GM12878 (cell line): ENCODE measurements at regions of chr1 and their contacts with region 1.

Region 1: DNA sequence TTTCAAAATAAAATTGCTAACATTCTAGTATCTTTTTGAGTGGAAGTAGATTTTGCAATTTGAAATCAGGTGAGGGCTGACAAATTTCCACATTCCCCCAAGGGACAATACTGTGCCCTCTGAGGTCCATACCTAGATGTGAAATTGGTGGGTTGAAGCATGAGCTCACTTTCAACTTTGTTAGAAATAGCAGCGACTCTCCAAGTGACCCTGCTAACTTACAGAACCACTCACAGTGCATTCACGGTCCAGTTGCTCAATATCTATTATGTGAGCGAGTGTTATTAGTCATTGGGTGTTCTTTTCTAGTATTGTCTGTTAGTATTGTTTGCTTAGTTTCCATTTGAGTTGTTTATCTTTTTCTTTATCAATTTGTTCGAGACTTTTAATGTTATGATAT is 53.6 kb upstream of the ASB17 start:
- DNase-seq: peak; percentile 75
- ATAC-seq: peak; percentile 93
- H3K4me3 ChIP-seq: no peak overlapping the region
- H3K27ac ChIP-seq: no peak overlapping the region
- H3K4me1 ChIP-seq: peaks cover 9% of the 10 kb centered on the region
- H3K27me3 ChIP-seq: no peaks in the 10 kb centered on the region
- CTCF ChIP-seq: no peak
- EP300 ChIP-seq: peak in 1 of 2 experiments; percentile 50; a peak in 1 of 4 replicates
- POLR2A ChIP-seq: no peak
- RAD21 ChIP-seq: no peak

Region 2: GRCh38 chr1:75724472-75725022 is 261.3 kb before region 1 on chr1 and contains the start of gene ACADM:
- CTCF ChIA-PET with region 1: interaction called, 4 read pairs
- POLR2A ChIA-PET with region 1: no interaction called
- RAD21 ChIA-PET with region 1: no interaction called
- SMC1A ChIA-PET with region 1: no interaction called
- in situ Hi-C with region 1: loop called (anchors 10 kb)
- intact Hi-C with region 1: loop called (anchors 5 kb)
- DNase-seq: peak; percentile 53
- ATAC-seq: peak; percentile 91
- H3K4me3 ChIP-seq: peak within 1 kb of the TSS; percentile 70
- H3K27ac ChIP-seq: peak within 1 kb of the TSS; percentile 83
- H3K4me1 ChIP-seq: 0 out of 2 replicates have a peak, but pooled peaks cover 2% of the 10 kb centered on the region
- H3K27me3 ChIP-seq: no peaks in the 10 kb centered on the region
- CTCF ChIP-seq: no peak
- EP300 ChIP-seq: no peak
- POLR2A ChIP-seq: peak; percentile 99
- RAD21 ChIP-seq: no peak
- polyA plus RNA-seq, gene ACADM: 178 to 191 TPM

Region 3: GRCh38 chr1:75785983-75786853 is 199.6 kb before region 1 on chr1 and contains the start of gene RABGGTB:
- CTCF ChIA-PET with region 1: no interaction called
- POLR2A ChIA-PET with region 1: no interaction called
- RAD21 ChIA-PET with region 1: no interaction called
- SMC1A ChIA-PET with region 1: no interaction called
- in situ Hi-C with region 1: loop called (anchors 5 kb)
- intact Hi-C with region 1: loop called (anchors 10 kb)
- DNase-seq: peak; percentile 92
- ATAC-seq: peak; percentile 80
- H3K4me3 ChIP-seq: peak within 1 kb of the TSS; percentile 80
- H3K27ac ChIP-seq: peak within 1 kb of the TSS; percentile 98
- H3K4me1 ChIP-seq: peaks cover 2% of the 10 kb centered on the region; the same call in 1 of the 2 replicates
- H3K27me3 ChIP-seq: no peaks in the 10 kb centered on the region
- CTCF ChIP-seq: no peak
- EP300 ChIP-seq: no peak
- POLR2A ChIP-seq: peak; percentile 100
- RAD21 ChIP-seq: no peak
- polyA plus RNA-seq, gene RABGGTB: 135 to 153 TPM

Region 4: DNA sequence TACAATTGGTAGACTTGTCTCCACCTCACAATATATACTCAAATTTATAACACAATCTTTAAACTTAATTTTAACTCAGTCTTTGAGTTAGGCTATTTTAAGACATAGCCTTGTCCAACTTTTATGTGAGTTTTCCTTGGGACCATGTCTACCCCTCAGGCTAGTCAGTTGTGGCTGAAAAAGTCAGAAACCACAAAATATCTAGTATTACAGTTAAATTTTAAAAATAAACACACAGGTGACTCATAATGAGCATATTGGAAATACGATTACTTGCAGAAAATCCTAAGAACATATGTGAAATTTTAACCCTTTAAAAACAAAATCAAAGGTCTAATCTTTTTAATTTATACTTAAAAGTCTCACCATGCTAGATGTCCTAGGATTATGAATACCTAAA is 48.8 kb before region 1 on chr1:
- CTCF ChIA-PET with region 1: no interaction called
- POLR2A ChIA-PET with region 1: no interaction called
- RAD21 ChIA-PET with region 1: interaction called, 5 read pairs
- SMC1A ChIA-PET with region 1: interaction called, 7 read pairs
- in situ Hi-C with region 1: no loop called
- intact Hi-C with region 1: loop called (anchors 5 kb)
- DNase-seq: no peak
- ATAC-seq: peak; percentile 62
- H3K4me3 ChIP-seq: no peak overlapping the region
- H3K27ac ChIP-seq: no peak overlapping the region
- H3K4me1 ChIP-seq: no peaks in the 10 kb centered on the region
- H3K27me3 ChIP-seq: no peaks in the 10 kb centered on the region
- CTCF ChIP-seq: no peak
- EP300 ChIP-seq: no peak
- POLR2A ChIP-seq: no peak
- RAD21 ChIP-seq: no peak

Region 5: DNA sequence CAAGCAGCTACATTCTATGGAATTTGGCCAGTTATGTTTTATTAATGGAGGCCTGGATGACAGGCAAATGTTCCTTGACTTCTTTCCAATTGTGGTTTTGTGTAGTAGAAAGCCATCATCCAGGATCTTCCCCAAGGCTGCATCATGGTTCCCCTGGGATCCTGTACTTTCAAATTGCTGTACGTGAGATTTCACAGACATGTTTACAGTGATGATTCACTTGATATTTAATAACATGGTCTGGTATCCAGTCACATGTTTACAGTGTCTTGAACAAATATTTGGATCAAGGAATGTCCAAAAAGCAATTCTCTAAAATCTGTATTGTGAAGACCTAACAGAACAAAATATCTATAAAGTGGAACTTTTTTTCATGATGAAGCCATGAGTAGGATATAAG is 20.4 kb after region 1 on chr1:
- CTCF ChIA-PET with region 1: no interaction called
- POLR2A ChIA-PET with region 1: no interaction called
- RAD21 ChIA-PET with region 1: no interaction called
- SMC1A ChIA-PET with region 1: no interaction called
- in situ Hi-C with region 1: no loop called
- intact Hi-C with region 1: no loop called
- DNase-seq: no peak
- ATAC-seq: no peak
- H3K4me3 ChIP-seq: no peak overlapping the region
- H3K27ac ChIP-seq: no peak overlapping the region
- H3K4me1 ChIP-seq: no peaks in the 10 kb centered on the region
- H3K27me3 ChIP-seq: no peaks in the 10 kb centered on the region
- CTCF ChIP-seq: no peak
- EP300 ChIP-seq: no peak
- POLR2A ChIP-seq: no peak
- RAD21 ChIP-seq: no peak

Region 6: GRCh38 chr1:76105372-76105771 is 119.5 kb after region 1 on chr1:
- CTCF ChIA-PET with region 1: no interaction called
- POLR2A ChIA-PET with region 1: no interaction called
- RAD21 ChIA-PET with region 1: no interaction called
- SMC1A ChIA-PET with region 1: no interaction called
- in situ Hi-C with region 1: no loop called
- intact Hi-C with region 1: no loop called
- DNase-seq: no peak
- ATAC-seq: no peak
- H3K4me3 ChIP-seq: no peak overlapping the region
- H3K27ac ChIP-seq: no peak overlapping the region
- H3K4me1 ChIP-seq: no peaks in the 10 kb centered on the region
- H3K27me3 ChIP-seq: no peaks in the 10 kb centered on the region
- CTCF ChIP-seq: no peak
- EP300 ChIP-seq: no peak
- POLR2A ChIP-seq: no peak
- RAD21 ChIP-seq: no peak